Activated B cell treated with CpG ODN at 0.5 μM for 24 hours (primary cell): ENCODE measurements at regions of chr6 and their contacts with region 1.

Region 1: GRCh38 chr6:29752451-29753308 is 29.4 kb downstream of the HLA-F start:
- DNase-seq: peak; percentile 80
- ATAC-seq: peak; percentile 68
- H3K4me3 Mint-ChIP-seq: peak overlapping the region; percentile 96
- H3K27ac Mint-ChIP-seq: peak overlapping the region; percentile 94
- H3K4me1 Mint-ChIP-seq: peaks cover 38% of the 10 kb centered on the region
- H3K27me3 Mint-ChIP-seq: no peaks in the 10 kb centered on the region
- CTCF ChIP-seq: no peak

Region 2: GRCh38 chr6:29632789-29633533 is 119.7 kb before region 1 on chr6 and contains the start of gene GABBR1:
- CTCF ChIA-PET with region 1: no interaction called
- POLR2A ChIA-PET with region 1: no interaction called
- intact Hi-C with region 1: loop called (anchors 5 kb)
- DNase-seq: peak; percentile 80
- ATAC-seq: peak; percentile 81
- H3K4me3 Mint-ChIP-seq: peak within 1 kb of the TSS; percentile 84
- H3K27ac Mint-ChIP-seq: peak within 1 kb of the TSS; percentile 86
- H3K4me1 Mint-ChIP-seq: peaks cover 68% of the 10 kb centered on the region
- H3K27me3 Mint-ChIP-seq: no peaks in the 10 kb centered on the region
- CTCF ChIP-seq: no peak
- total RNA-seq, gene GABBR1: 88.9 and 117 TPM in 2 replicates

Region 3: GRCh38 chr6:29705389-29706231 is 47.1 kb before region 1 on chr6:
- CTCF ChIA-PET with region 1: interaction called, 10 read pairs
- POLR2A ChIA-PET with region 1: no interaction called
- intact Hi-C with region 1: loop called (anchors 1 kb)
- DNase-seq: no peak
- ATAC-seq: no peak
- H3K4me3 Mint-ChIP-seq: no peak overlapping the region
- H3K27ac Mint-ChIP-seq: no peak overlapping the region
- H3K4me1 Mint-ChIP-seq: peaks cover 17% of the 10 kb centered on the region
- H3K27me3 Mint-ChIP-seq: peaks cover 26% of the 10 kb centered on the region
- CTCF ChIP-seq: no peak

Region 4: DNA sequence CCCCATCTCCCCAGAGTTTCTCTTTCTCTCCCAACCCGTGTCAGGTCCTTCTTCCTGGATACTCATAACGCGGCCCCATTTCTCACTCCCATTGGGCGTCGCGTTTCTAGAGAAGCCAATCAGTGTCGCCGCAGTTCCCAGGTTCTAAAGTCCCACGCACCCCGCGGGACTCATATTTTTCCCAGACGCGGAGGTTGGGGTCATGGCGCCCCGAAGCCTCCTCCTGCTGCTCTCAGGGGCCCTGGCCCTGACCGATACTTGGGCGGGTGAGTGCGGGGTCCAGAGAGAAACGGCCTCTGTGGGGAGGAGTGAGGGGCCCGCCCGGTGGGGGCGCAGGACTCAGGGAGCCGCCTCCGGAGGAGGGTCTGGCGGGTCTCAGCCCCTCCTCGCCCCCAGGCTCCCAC is 29.4 kb before region 1 on chr6 and contains the start of gene HLA-F:
- CTCF ChIA-PET with region 1: interaction called, 4 read pairs
- POLR2A ChIA-PET with region 1: interaction called, 17 read pairs
- intact Hi-C with region 1: no loop called
- DNase-seq: peak; percentile 76
- ATAC-seq: peak; percentile 89
- H3K4me3 Mint-ChIP-seq: peak within 1 kb of the TSS; percentile 94
- H3K27ac Mint-ChIP-seq: peak within 1 kb of the TSS; percentile 98
- H3K4me1 Mint-ChIP-seq: peaks cover 61% of the 10 kb centered on the region
- H3K27me3 Mint-ChIP-seq: no peaks in the 10 kb centered on the region
- CTCF ChIP-seq: no peak
- total RNA-seq, gene HLA-F: 726 and 736 TPM in 2 replicates

Region 5: GRCh38 chr6:29737707-29738630 is 14.7 kb before region 1 on chr6:
- CTCF ChIA-PET with region 1: interaction called, 34 read pairs
- POLR2A ChIA-PET with region 1: interaction called, 11 read pairs
- intact Hi-C with region 1: loop called (anchors 1 kb)
- DNase-seq: peak; percentile 42
- ATAC-seq: peak; percentile 86
- H3K4me3 Mint-ChIP-seq: no peak overlapping the region
- H3K27ac Mint-ChIP-seq: no peak overlapping the region
- H3K4me1 Mint-ChIP-seq: peaks cover 12% of the 10 kb centered on the region
- H3K27me3 Mint-ChIP-seq: no peaks in the 10 kb centered on the region
- CTCF ChIP-seq: no peak

Region 6: GRCh38 chr6:29792123-29793035 is 39.7 kb after region 1 on chr6:
- CTCF ChIA-PET with region 1: no interaction called
- POLR2A ChIA-PET with region 1: no interaction called
- intact Hi-C with region 1: loop called (anchors 1 kb)
- DNase-seq: peak; percentile 56
- ATAC-seq: peak; percentile 88
- H3K4me3 Mint-ChIP-seq: peak overlapping the region; percentile 87
- H3K27ac Mint-ChIP-seq: no peak overlapping the region
- H3K4me1 Mint-ChIP-seq: peaks cover 12% of the 10 kb centered on the region
- H3K27me3 Mint-ChIP-seq: peaks cover 34% of the 10 kb centered on the region
- CTCF ChIP-seq: no peak

Region 7: DNA sequence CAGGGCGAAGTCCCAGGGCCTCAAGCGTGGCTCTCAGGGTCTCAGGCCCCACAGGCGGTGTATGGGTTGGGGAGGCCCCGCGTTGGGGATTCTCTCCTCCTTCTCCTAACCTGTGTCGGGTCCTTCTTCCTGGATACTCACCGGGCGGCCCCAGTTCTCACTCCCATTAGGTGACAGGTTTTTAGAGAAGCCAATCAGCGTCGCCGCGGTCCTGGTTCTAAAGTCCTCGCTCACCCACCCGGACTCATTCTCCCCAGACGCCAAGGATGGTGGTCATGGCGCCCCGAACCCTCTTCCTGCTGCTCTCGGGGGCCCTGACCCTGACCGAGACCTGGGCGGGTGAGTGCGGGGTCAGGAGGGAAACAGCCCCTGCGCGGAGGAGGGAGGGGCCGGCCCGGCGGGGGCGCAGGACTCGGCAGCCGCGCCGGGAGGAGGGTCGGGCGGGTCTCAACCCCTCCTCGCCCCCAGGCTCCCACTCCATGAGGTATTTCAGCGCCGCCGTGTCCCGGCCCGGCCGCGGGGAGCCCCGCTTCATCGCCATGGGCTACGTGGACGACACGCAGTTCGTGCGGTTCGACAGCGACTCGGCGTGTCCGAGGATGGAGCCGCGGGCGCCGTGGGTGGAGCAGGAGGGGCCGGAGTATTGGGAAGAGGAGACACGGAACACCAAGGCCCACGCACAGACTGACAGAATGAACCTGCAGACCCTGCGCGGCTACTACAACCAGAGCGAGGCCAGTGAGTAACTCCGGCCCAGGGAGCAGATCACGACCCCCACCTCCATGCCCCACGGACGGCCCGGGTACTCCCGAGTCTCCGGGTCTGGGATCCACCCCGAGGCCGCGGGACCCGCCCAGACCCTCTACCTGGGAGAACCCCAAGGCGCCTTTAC is 75.1 kb after region 1 on chr6 and contains the start of gene HLA-G:
- CTCF ChIA-PET with region 1: no interaction called
- POLR2A ChIA-PET with region 1: no interaction called
- intact Hi-C with region 1: loop called (anchors 5 kb)
- DNase-seq: no peak
- ATAC-seq: peak; percentile 31
- H3K4me3 Mint-ChIP-seq: peak within 1 kb of the TSS; percentile 78
- H3K27ac Mint-ChIP-seq: no peak within 1 kb of the TSS
- H3K4me1 Mint-ChIP-seq: peaks cover 10% of the 10 kb centered on the region
- H3K27me3 Mint-ChIP-seq: peaks cover 61% of the 10 kb centered on the region
- CTCF ChIP-seq: no peak
- total RNA-seq, gene HLA-G: 5.4 and 8.5 TPM in 2 replicates